ENCODE measurements at regions of chr17 and their contacts with region 1.

Region 1: GRCh38 chr17:50872710-50873424 is 6.7 kb upstream of the TOB1 start:
- DNase-seq: no peak
- H3K4me3 ChIP-seq: no peak overlapping the region
- H3K27ac ChIP-seq: peak overlapping the region in 1 of 2 experiments; percentile 84; a peak in 2 of 4 replicates
- H3K4me1 ChIP-seq: peaks cover 0 to 30% of the 10 kb centered on the region in 2 experiments; a peak in 2 of 4 replicates
- H3K27me3 ChIP-seq: no peaks in the 10 kb centered on the region
- CTCF ChIP-seq: no peak
- EP300 ChIP-seq: peak; percentile 16 to 39; a peak in 2 of 4 replicates
- RAD21 ChIP-seq: no peak

Region 2: GRCh38 chr17:50883850-50884438 is 11.1 kb after region 1 on chr17:
- CTCF ChIA-PET with region 1: interaction called, 13 read pairs
- POLR2A ChIA-PET with region 1: interaction called, 3 read pairs
- DNase-seq: no peak
- H3K4me3 ChIP-seq: no peak overlapping the region
- H3K27ac ChIP-seq: no peak overlapping the region
- H3K4me1 ChIP-seq: no peaks in the 10 kb centered on the region; a peak in 1 of 4 replicates
- H3K27me3 ChIP-seq: no peaks in the 10 kb centered on the region
- CTCF ChIP-seq: no peak
- EP300 ChIP-seq: no peak
- RAD21 ChIP-seq: no peak